ENCODE measurements at regions of chr10 and their contacts with region 1.

Region 1: DNA sequence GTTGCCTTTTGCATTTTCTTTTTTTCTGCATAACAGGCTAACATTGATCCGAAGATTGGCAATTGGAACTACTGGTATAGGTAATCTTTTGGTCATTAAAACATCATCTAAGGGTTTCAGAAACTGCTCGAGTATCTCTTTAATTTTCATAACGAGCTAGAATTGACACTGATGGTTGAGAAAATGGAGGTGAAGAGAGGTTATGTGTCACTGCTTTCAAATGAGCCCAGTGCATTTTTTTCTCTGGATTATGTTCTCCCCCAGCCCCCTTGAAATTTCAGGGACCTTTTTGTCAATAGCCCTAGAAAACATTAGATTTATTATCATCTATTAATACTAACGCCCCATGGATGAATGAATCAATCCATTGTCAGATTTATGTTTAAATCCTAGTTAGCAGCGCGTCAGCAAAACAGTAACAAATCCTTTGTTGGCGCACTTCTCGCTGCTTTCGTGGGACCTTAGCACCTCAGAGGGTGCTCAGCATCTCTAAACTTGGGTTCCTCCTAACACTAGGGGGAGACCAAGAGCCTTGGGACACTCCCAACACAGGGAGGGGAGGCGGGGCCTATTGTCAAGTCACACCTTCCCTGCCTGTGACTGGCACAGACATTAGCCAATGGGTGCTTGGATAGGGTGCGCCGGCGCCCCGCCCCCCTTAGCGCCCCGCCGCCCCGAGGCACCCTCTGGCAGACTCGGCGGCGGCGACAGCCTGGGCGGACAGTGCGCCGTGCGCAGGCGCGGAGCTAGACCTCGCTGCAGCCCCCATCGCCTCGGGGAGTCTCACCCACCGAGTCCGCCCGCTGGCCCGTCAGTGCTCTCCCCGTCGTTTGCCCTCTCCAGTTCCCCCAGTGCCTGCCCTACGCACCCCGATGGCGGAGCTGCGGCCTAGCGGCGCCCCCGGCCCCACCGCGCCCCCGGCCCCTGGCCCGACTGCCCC is at the start of gene SUFU:
- DNase-seq: peak; percentile 96
- H3K4me3 ChIP-seq: peak within 1 kb of the TSS; percentile 72 to 78 (median 78)
- H3K27ac ChIP-seq: peak within 1 kb of the TSS; percentile 40
- H3K4me1 ChIP-seq: peaks cover 12% of the 10 kb centered on the region
- H3K27me3 ChIP-seq: no peaks in the 10 kb centered on the region
- CTCF ChIP-seq: peak; percentile 89 to 97
- total RNA-seq, gene SUFU: 2.5 to 9.2 TPM

Region 2: DNA sequence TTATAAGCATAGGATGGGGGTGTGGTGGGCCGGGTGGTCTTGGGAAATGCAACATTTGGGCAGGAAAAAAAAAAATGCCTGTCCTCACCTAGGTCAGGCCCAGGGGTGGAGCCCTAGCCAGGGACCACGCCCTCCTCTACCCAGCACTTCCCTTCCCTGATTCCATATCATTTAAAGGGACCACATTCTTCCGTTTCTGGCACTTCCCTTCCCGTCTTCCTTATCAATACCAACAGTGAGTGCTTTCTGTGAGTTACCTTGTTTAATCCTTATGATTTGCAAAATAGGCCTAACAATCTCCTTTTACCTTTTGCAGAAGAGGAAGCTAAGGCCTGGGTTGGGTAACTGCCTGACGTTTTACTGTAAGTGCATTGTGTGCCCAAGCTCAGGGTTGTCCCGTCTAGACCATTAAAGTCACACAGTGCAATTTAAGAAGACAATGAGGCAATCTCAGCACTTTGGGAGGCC is 35.5 kb before region 1 on chr10:
- CTCF ChIA-PET with region 1: interaction called, 5 read pairs
- dilution Hi-C with region 1: loop called (anchors 5 kb)
- in situ Hi-C with region 1: no loop called
- intact Hi-C with region 1: no loop called
- DNase-seq: no peak
- H3K4me3 ChIP-seq: no peak overlapping the region
- H3K27ac ChIP-seq: no peak overlapping the region
- H3K4me1 ChIP-seq: no peaks in the 10 kb centered on the region
- H3K27me3 ChIP-seq: no peaks in the 10 kb centered on the region
- CTCF ChIP-seq: no peak

Region 3: DNA sequence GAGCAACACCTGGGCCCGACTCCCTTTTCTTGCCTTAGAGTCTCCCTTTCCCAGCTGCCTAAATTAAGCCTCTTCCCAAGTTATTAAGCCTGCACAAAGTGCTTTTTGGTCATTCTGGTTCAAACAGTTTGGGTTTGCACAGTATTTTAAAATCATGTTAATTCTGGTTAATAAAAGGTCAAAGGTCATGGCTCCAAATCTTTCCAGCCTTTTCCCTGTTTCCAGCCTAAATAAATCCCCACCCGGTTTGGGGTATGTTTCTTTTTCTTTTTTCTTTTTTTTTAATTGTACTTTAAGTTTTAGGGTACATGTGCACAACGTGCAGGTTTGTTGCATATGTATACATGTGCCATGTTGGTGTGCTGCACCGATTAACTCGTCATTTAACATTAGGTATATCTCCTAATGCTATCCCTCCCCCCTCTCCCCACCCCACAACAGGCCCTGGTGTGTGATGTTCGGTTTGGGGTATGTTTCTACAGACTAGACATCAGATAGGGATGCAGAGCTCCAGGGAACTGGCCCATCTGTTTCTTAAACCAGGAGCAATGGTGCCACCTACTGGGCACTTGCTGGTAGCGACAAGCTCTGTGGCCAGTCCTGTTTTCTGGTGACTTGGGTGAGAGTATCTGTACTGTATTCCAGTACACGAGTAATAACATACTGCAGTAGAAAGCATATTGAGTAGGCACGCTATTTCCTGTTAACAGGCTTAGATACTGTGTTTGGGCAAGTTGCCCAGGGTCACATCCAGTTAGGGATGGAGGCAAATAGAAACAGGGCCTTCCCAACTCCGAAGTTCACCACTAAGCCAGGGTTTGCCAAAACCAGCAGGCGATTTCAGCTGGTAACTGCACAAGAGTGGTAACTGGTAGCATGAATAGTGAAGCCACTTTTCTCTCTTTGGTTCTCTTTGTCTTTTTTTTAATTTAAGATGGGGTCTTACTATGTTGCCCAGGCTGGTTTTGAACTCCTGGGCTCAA is 80.2 kb after region 1 on chr10:
- CTCF ChIA-PET with region 1: interaction called, 26 read pairs
- dilution Hi-C with region 1: no loop called
- in situ Hi-C with region 1: no loop called
- intact Hi-C with region 1: loop called (anchors 1 kb)
- DNase-seq: peak; percentile 66
- H3K4me3 ChIP-seq: no peak overlapping the region
- H3K27ac ChIP-seq: no peak overlapping the region
- H3K4me1 ChIP-seq: no peaks in the 10 kb centered on the region
- H3K27me3 ChIP-seq: no peaks in the 10 kb centered on the region
- CTCF ChIP-seq: peak; percentile 89 to 91

Region 4: DNA sequence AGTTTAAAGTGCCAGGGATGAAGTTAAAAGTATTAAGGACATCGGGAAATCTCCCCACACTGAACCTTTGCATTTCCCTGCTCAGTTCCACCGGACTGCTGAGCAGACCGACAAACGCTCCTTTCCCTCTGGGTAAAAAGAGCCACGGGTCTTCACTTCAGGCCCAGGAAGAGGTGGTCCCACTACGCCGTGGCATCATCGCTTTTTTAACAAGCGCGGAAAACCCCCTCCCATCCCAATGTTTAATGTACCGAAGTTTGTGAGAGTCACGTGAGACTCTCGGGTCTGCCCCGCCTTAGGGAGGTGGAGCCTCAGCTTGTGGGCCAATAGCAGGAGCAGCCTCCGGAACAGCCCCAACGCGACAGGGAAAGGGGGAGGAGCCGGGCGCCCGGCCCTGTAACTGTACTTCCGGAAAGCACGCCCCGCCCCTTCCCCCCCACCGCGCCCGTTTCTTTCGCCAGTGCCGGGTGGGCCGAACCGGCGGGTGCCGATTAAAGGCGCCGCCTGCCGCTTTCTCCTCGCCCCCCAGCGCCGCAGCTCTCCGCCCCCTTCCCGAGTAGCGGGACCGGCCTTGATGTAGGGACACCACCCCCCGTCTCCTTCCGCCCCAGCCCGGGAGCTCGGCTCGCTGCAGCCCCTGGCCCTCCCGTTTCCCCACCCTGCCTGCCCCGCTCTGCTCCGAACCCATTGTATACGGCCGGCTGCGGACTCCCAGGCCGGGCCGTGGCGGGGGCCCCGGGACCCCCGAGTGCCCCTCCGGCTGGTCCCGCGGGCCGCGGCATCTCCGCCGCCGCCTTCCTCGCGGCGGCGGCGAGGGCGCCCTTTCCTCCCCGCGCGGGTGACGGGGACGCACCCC is 138.6 kb after region 1 on chr10:
- CTCF ChIA-PET with region 1: no interaction called
- dilution Hi-C with region 1: no loop called
- in situ Hi-C with region 1: no loop called
- intact Hi-C with region 1: loop called (anchors 1 kb)
- DNase-seq: peak; percentile 93
- H3K4me3 ChIP-seq: peak overlapping the region; percentile 64 to 93 (median 86)
- H3K27ac ChIP-seq: peak overlapping the region; percentile 71
- H3K4me1 ChIP-seq: peaks cover 8% of the 10 kb centered on the region
- H3K27me3 ChIP-seq: no peaks in the 10 kb centered on the region
- CTCF ChIP-seq: no peak

Measured in mammary epithelial cell (primary cell).